ENCODE measurements at regions of chr2 and their contacts with region 1.

Region 1: GRCh38 chr2:175167792-175168563 is at the start of gene ATF2:
- DNase-seq: peak; percentile 99
- total RNA-seq, gene ATF2: 27.4 TPM

Region 2: DNA sequence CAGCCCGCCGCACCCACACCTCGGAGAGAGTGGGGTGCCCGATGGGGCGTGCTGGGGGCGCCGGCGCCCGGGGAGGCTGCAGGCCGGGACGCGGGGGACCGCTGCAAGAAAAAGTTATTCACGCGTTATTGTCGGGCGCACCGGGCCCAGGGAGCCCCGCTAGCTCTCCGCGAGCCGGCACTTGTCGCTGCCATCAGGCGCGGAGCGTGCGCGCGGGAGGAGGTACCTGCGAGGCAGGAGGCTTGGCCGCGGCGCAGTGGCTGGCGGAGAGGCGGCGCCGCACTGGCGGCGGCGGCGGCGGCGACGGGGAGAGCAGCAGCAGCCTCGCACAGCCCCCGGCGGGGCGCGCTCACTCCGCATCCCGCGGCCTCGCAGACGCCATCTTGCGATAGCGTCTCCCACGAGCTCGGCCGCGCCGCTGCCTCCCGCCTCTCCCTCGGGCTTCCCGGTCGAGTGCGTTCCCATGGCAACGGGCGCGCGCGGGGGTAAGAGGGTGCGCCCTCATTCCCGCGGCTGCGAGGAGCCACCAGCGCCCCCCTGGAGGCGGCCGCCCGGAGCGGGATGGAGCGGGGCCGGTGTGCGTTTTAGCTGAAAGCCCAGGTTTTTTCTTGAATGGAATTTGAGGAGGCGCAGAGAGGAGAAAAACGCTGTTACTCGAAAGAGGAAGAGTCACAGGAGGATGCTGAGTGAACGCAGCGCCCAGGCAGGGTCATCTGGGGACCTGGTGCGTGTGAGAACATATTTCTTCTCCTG is 162.8 kb before region 1 on chr2 and contains the start of gene CHN1:
- intact Hi-C with region 1: loop called (anchors 10 kb)
- DNase-seq: peak; percentile 87
- total RNA-seq, gene CHN1: 23.8 TPM

Region 3: DNA sequence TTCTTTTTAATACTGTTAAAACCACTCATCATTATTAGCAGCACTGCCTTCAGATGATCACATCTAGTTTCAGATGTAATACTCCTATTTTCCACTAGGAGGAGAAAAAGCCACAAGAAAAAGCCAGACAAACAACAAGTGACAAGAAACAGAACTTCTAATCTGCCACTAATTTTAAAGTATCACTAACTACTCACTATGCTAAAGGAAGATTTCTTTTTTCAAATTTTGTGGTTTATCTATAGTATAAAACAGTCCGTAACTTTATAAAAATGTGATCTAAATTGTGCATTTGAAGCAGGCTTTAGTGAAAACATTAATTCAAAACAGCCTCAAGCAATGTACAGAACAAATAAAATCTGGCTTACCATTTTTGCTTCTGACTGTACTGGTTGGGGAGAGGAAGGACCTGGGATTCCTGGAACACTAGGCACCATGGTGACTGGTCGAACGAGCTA is 56.7 kb before region 1 on chr2:
- intact Hi-C with region 1: no loop called
- DNase-seq: no peak

Region 4: GRCh38 chr2:175432021-175432420 is 264.0 kb after region 1 on chr2:
- intact Hi-C with region 1: no loop called
- DNase-seq: no peak